Activated naive CD8-positive, alpha-beta T cell treated with anti-CD3 and anti-CD28 coated beads, Interleukin-2, amount 10 ng/mL, durations not matched to agents 7 days and 5 days (primary cell): ENCODE measurements at regions of chr9 and their contacts with region 1.

Region 1: DNA sequence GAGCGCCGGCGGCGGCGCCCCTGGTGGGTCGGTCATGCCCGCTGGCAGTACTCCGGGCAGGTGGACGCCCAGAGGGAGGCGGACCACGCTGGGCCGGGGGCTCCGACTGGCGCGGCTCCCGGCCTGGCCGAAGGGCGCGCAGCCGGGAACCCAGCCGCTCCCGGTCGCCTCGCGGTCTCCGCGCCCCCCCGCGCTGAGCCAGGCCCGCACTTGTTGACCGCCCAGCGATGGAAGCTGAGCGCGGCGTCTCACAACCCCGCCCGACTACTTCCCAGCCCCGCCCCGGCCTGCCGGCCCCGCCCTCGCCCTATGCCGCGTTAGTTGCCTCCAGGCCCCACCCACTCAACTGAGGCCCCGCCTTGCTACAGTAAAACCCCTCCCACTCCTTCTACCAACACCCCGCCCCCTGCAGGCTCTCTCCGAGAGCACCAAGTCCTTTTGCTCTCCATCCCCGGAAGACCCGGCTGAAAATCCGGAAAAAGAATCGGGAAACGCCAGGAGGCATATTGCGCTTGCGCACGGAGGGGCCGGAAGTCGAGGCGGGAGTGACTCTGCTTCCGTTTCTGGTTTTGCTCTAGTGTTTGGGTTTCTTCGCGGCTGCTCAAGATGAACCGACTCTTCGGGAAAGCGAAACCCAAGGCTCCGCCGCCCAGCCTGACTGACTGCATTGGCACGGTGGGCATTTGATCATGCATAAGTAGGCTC is at the starts of genes BAG1 and CHMP5:
- DNase-seq: peak; percentile 99
- ATAC-seq: peak; percentile 85
- H3K4me3 Mint-ChIP-seq: peak within 1 kb of the TSS; percentile 98
- H3K27ac Mint-ChIP-seq: peak within 1 kb of the TSS; percentile 97
- H3K4me1 Mint-ChIP-seq: peaks cover 40% of the 10 kb centered on the region
- H3K27me3 Mint-ChIP-seq: no peaks in the 10 kb centered on the region
- total RNA-seq, gene BAG1: 63.8 to 73.2 TPM
- total RNA-seq, gene CHMP5: 96.1 to 97.1 TPM

Region 2: GRCh38 chr9:33076358-33077004 is 188.1 kb before region 1 on chr9 and contains the start of gene SMU1:
- POLR2A ChIA-PET with region 1: interaction called, 10 read pairs
- DNase-seq: peak; percentile 91
- ATAC-seq: peak; percentile 97
- H3K4me3 Mint-ChIP-seq: peak within 1 kb of the TSS; percentile 100
- H3K27ac Mint-ChIP-seq: peak within 1 kb of the TSS; percentile 100
- H3K4me1 Mint-ChIP-seq: peaks cover 21% of the 10 kb centered on the region
- H3K27me3 Mint-ChIP-seq: no peaks in the 10 kb centered on the region
- total RNA-seq, gene SMU1: 22.2 to 22.9 TPM

Region 3: GRCh38 chr9:33167046-33167808 is 97.4 kb before region 1 on chr9 and contains the start of gene B4GALT1:
- POLR2A ChIA-PET with region 1: interaction called, 12 read pairs
- DNase-seq: peak; percentile 97
- ATAC-seq: peak; percentile 86
- H3K4me3 Mint-ChIP-seq: peak within 1 kb of the TSS; percentile 98
- H3K27ac Mint-ChIP-seq: peak within 1 kb of the TSS; percentile 100
- H3K4me1 Mint-ChIP-seq: peaks cover 45% of the 10 kb centered on the region
- H3K27me3 Mint-ChIP-seq: no peaks in the 10 kb centered on the region
- total RNA-seq, gene B4GALT1: 34.6 to 35.7 TPM

Region 4: GRCh38 chr9:33187519-33188218 is 77.0 kb before region 1 on chr9:
- POLR2A ChIA-PET with region 1: no interaction called
- DNase-seq: no peak
- ATAC-seq: no peak
- H3K4me3 Mint-ChIP-seq: no peak overlapping the region
- H3K27ac Mint-ChIP-seq: no peak overlapping the region
- H3K4me1 Mint-ChIP-seq: peaks cover 3% of the 10 kb centered on the region
- H3K27me3 Mint-ChIP-seq: peaks cover 10% of the 10 kb centered on the region

Region 5: DNA sequence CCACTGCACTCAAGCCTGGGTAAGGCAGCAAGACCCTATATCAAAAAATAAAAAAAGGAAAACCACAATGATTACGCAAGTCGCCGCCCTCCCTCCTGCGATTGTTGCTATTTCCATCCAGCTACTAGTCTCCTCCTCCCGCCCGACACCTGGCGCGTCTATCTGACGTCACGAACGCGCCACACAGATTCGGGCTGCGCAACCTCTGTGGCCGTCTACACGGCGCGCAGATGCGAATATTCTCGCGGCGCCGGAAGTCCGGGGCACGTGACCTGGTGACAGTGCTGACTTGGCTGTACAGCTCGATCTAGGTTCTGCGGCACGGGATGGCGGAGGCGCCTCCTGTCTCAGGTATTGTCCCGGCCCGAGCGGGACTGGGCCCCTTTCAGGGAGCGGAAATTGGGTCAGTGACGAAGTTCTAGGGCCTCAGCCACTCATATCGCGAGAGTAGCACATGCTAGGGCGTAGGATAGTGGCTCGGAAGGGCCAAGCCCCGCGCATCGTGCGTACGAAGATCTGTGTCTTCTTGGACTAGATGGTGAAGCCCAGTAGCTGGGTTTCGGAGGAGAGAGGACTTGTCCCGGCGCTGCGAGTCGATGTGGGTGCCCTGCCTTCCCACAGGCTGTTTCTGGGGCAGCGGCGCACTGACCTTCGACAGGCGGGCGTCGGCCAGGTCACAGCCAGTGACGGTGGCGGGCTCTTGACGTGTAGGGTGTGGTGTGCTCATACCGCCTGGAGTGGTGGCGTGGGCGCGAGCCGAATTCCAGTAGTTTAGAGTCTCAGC is 25.8 kb after region 1 on chr9 and contains the start of gene NFX1:
- POLR2A ChIA-PET with region 1: interaction called, 36 read pairs
- DNase-seq: peak; percentile 97
- ATAC-seq: peak; percentile 89
- H3K4me3 Mint-ChIP-seq: peak within 1 kb of the TSS; percentile 93
- H3K27ac Mint-ChIP-seq: peak within 1 kb of the TSS; percentile 98
- H3K4me1 Mint-ChIP-seq: peaks cover 45% of the 10 kb centered on the region
- H3K27me3 Mint-ChIP-seq: no peaks in the 10 kb centered on the region
- total RNA-seq, gene NFX1: 47.4 to 48.2 TPM